Sigmoid colon (tissue), 7 donors: ENCODE measurements at regions of chr3 and their contacts with region 1.

Region 1: GRCh38 chr3:192831111-192831644 is 86.5 kb downstream of the MB21D2 start:
- DNase-seq: no peak
- H3K4me3 ChIP-seq: no peak overlapping the region
- H3K27ac ChIP-seq: peak overlapping the region in 2 of 4 donors; percentile 41 to 78
- H3K4me1 ChIP-seq: peaks cover 0 to 64% (median 53%) of the 10 kb centered on the region in 4 donors
- H3K27me3 ChIP-seq: no peaks in the 10 kb centered on the region
- CTCF ChIP-seq: no peak
- EP300 ChIP-seq: no peak
- POLR2A ChIP-seq: no peak

Region 2: GRCh38 chr3:192566706-192567290 is 264.4 kb before region 1 on chr3:
- intact Hi-C with region 1: no loop called
- DNase-seq: peak; percentile 76
- H3K4me3 ChIP-seq: no peak overlapping the region
- H3K27ac ChIP-seq: no peak overlapping the region
- H3K4me1 ChIP-seq: peaks cover 0 to 7% (median 5%) of the 10 kb centered on the region in 4 donors
- H3K27me3 ChIP-seq: no peaks in the 10 kb centered on the region
- CTCF ChIP-seq: peak; percentile 43 to 70 (median 50)
- EP300 ChIP-seq: no peak
- POLR2A ChIP-seq: no peak

Region 3: GRCh38 chr3:192684151-192684550 is 147.0 kb before region 1 on chr3:
- intact Hi-C with region 1: no loop called
- DNase-seq: no peak
- H3K4me3 ChIP-seq: no peak overlapping the region
- H3K27ac ChIP-seq: no peak overlapping the region
- H3K4me1 ChIP-seq: no peaks in the 10 kb centered on the region
- H3K27me3 ChIP-seq: no peaks in the 10 kb centered on the region
- CTCF ChIP-seq: no peak
- EP300 ChIP-seq: no peak
- POLR2A ChIP-seq: no peak

Region 4: DNA sequence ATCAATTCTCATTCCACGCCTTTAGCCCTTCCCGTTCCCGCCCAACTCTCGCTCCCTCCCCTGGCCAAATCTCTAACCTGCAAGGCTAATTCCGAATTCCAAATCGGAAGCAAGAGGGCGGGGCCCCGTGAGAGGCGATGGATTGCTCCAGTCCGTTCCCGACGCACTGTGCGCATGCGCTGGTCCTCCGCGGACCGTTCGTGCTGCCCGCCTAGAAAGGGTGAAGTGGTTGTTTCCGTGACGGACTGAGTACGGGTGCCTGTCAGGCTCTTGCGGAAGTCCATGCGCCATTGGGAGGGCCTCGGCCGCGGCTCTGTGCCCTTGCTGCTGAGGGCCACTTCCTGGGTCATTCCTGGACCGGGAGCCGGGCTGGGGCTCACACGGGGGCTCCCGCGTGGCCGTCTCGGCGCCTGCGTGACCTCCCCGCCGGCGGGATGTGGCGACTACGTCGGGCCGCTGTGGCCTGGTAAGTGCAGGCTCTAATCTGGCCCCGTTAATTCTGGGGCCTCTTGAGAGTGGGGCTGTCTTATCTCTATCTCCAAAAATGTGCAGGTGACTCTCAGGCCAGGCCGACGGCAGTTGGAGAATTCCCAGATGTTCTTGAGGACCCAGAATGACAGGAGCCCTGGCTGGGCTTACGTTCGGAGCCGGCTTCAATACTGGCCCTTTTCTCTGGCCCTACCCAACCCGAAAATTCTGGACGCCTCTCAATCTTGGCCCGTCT is 761.9 kb after region 1 on chr3 and contains the start of gene OPA1:
- intact Hi-C with region 1: loop called (anchors 5 kb)
- DNase-seq: peak; percentile 99
- H3K4me3 ChIP-seq: peak within 1 kb of the TSS; percentile 65 to 84 (median 72)
- H3K27ac ChIP-seq: peak within 1 kb of the TSS; percentile 83 to 88 (median 86)
- H3K4me1 ChIP-seq: peaks cover 0 to 21% (median 20%) of the 10 kb centered on the region in 4 donors
- H3K27me3 ChIP-seq: no peaks in the 10 kb centered on the region
- CTCF ChIP-seq: peak in 2 of 4 experiments; percentile 15 to 34
- EP300 ChIP-seq: peak in 1 of 4 donors; percentile 85
- POLR2A ChIP-seq: peak; percentile 57 to 73
- total RNA-seq, gene OPA1: 45.9 to 58.7 (median 49.0) TPM